ENCODE measurements at regions of chr17 and their contacts with region 1.

Region 1: DNA sequence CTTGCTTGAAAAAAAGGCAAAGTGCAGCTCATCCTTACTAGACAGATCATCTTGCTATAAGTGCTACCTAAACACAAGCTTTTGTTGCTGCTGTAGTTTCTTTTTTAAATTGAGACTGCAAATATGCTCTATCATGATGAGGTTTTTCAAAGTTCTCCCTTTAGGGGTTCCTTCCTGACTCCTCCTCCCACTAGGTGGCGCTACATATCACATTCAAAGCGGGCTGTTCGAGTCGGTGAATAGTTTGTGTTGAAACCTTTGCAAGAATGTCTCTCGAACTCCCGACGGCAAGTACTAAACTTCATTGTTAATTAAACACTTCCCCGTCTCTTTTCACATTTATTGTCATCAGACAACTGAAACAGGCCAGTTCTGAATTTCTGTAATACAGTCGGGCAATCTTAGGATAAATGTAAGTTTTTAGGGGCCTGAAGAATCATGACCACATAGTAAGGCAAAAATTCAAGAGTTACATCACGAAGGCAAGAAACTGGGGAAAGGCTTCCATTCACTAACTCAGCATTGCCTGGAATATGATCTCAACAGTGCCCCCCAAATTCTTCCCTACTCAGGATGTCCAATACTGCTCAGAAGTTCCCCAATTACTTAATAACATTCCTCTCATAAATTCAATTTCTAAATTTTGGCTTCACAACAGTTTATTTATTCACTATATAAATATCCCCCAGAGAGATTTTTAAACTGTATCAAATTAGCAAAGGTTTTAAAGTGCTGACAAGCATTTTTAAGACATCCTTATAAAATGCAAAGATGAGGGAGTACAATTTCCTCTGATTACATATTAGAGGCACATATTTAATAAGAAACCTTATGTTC is 6.7 kb downstream of the HS3ST3A1 start:
- DNase-seq: peak; percentile 59 to 91 (median 82)
- ATAC-seq: peak; percentile 56
- H3K4me3 ChIP-seq: no peak overlapping the region
- H3K4me3 Mint-ChIP-seq: no peak overlapping the region
- H3K27ac ChIP-seq: no peak overlapping the region
- H3K27ac Mint-ChIP-seq: no peak overlapping the region
- H3K4me1 ChIP-seq: no peaks in the 10 kb centered on the region
- H3K4me1 Mint-ChIP-seq: peaks cover 6% of the 10 kb centered on the region
- H3K27me3 ChIP-seq: peaks cover 0 to 4% of the 10 kb centered on the region in 2 experiments
- H3K27me3 Mint-ChIP-seq: peaks cover 24% of the 10 kb centered on the region
- CTCF ChIP-seq: peak; percentile 92

Region 2: GRCh38 chr17:13581925-13582324 is 13.1 kb before region 1 on chr17:
- CTCF ChIA-PET with region 1: interaction called, 12 read pairs
- POLR2A ChIA-PET with region 1: no interaction called
- intact Hi-C with region 1: no loop called
- DNase-seq: no peak
- ATAC-seq: no peak
- H3K4me3 ChIP-seq: no peak overlapping the region
- H3K4me3 Mint-ChIP-seq: no peak overlapping the region
- H3K27ac ChIP-seq: no peak overlapping the region
- H3K27ac Mint-ChIP-seq: no peak overlapping the region
- H3K4me1 ChIP-seq: no peaks in the 10 kb centered on the region
- H3K4me1 Mint-ChIP-seq: no peaks in the 10 kb centered on the region
- H3K27me3 ChIP-seq: no peaks in the 10 kb centered on the region
- H3K27me3 Mint-ChIP-seq: peaks cover 11% of the 10 kb centered on the region
- CTCF ChIP-seq: no peak

Region 3: GRCh38 chr17:14427900-14428647 is 833.1 kb after region 1 on chr17:
- CTCF ChIA-PET with region 1: interaction called, 8 read pairs
- POLR2A ChIA-PET with region 1: no interaction called
- intact Hi-C with region 1: loop called in 1 of 2 experiments (anchors 5 kb)
- DNase-seq: peak; percentile 18 to 90 (median 63)
- ATAC-seq: peak; percentile 97
- H3K4me3 ChIP-seq: peak overlapping the region; percentile 30 to 48
- H3K4me3 Mint-ChIP-seq: peak overlapping the region; percentile 76
- H3K27ac ChIP-seq: peak overlapping the region; percentile 25 to 67
- H3K27ac Mint-ChIP-seq: peak overlapping the region; percentile 90
- H3K4me1 ChIP-seq: peaks cover 44% of the 10 kb centered on the region
- H3K4me1 Mint-ChIP-seq: peaks cover 66% of the 10 kb centered on the region
- H3K27me3 ChIP-seq: no peaks in the 10 kb centered on the region
- H3K27me3 Mint-ChIP-seq: no peaks in the 10 kb centered on the region
- CTCF ChIP-seq: no peak

Region 4: GRCh38 chr17:14813649-14814365 is 1218.8 kb after region 1 on chr17:
- CTCF ChIA-PET with region 1: interaction called, 3 read pairs
- POLR2A ChIA-PET with region 1: no interaction called
- intact Hi-C with region 1: loop called in 1 of 2 experiments (anchors 10 kb)
- DNase-seq: peak in 3 of 9 experiments; percentile 16 to 42 (median 35)
- ATAC-seq: no peak
- H3K4me3 ChIP-seq: no peak overlapping the region
- H3K4me3 Mint-ChIP-seq: no peak overlapping the region
- H3K27ac ChIP-seq: no peak overlapping the region
- H3K27ac Mint-ChIP-seq: no peak overlapping the region
- H3K4me1 ChIP-seq: no peaks in the 10 kb centered on the region
- H3K4me1 Mint-ChIP-seq: no peaks in the 10 kb centered on the region
- H3K27me3 ChIP-seq: no peaks in the 10 kb centered on the region
- H3K27me3 Mint-ChIP-seq: peaks cover 5% of the 10 kb centered on the region
- CTCF ChIP-seq: no peak

Region 5: GRCh38 chr17:15171167-15172047 is 1576.4 kb after region 1 on chr17:
- CTCF ChIA-PET with region 1: no interaction called
- POLR2A ChIA-PET with region 1: no interaction called
- intact Hi-C with region 1: loop called in 1 of 2 experiments (anchors 5 kb)
- DNase-seq: peak in 5 of 9 experiments; percentile 0 to 27 (median 5)
- ATAC-seq: no peak
- H3K4me3 ChIP-seq: no peak overlapping the region
- H3K4me3 Mint-ChIP-seq: no peak overlapping the region
- H3K27ac ChIP-seq: no peak overlapping the region
- H3K27ac Mint-ChIP-seq: no peak overlapping the region
- H3K4me1 ChIP-seq: no peaks in the 10 kb centered on the region
- H3K4me1 Mint-ChIP-seq: no peaks in the 10 kb centered on the region
- H3K27me3 ChIP-seq: no peaks in the 10 kb centered on the region
- H3K27me3 Mint-ChIP-seq: peaks cover 9% of the 10 kb centered on the region
- CTCF ChIP-seq: peak; percentile 44